CD4-positive, alpha-beta T cell (primary cell): ENCODE measurements at regions of chr16 and their contacts with region 1.

Region 1: DNA sequence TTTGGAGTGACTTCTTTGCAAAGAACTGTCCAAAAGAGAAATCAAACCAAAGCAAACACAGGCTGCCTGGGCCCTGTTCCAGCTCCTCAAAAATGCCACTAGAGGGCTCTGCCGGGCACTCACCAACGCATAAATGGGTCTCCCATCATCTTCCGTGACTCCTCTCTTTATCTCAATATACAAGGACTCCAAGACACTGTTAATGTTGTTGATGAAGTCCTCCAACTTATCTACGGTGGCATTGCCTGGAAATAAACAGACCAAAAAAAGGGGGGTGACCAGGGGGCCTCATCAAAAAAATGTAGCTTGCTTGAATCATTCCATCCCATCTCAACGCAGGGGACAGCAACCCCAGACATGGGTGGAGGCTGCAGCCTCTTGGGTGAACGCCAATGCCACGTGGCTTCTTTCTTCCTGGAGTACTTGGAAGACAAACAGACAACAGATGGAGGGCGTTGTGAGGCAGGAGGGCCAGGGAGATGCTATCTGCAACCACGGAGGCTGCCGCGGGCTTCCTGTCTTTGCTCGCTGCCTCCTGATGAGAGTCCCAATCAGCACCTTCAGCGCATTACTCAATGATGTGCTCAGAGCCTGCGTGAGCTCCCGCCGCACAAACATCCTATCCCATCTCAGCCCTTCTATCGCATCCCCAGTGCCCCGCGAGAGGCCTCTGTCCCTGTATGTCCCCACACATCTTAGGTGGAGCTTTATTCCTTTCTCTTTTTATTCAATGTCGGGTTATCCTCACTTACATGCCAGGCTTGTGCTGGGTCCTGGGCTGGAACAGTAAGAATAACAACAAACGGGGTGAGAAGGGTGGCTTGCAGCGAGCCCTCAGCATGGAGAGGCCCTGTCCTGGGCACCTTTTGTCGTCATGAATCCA is 32.0 kb downstream of the KDM8 start:
- DNase-seq: peak; percentile 81 to 98 (median 94)
- ATAC-seq: peak; percentile 68
- H3K4me3 ChIP-seq: peak overlapping the region; percentile 1
- H3K4me3 Mint-ChIP-seq: peak overlapping the region; percentile 83
- H3K27ac ChIP-seq: peak overlapping the region; percentile 94 to 95
- H3K27ac Mint-ChIP-seq: peak overlapping the region; percentile 95
- H3K4me1 ChIP-seq: peaks cover 94% of the 10 kb centered on the region
- H3K4me1 Mint-ChIP-seq: peaks cover 91% of the 10 kb centered on the region
- H3K27me3 ChIP-seq: no peaks in the 10 kb centered on the region
- H3K27me3 Mint-ChIP-seq: no peaks in the 10 kb centered on the region
- CTCF ChIP-seq: peak; percentile 83

Region 2: DNA sequence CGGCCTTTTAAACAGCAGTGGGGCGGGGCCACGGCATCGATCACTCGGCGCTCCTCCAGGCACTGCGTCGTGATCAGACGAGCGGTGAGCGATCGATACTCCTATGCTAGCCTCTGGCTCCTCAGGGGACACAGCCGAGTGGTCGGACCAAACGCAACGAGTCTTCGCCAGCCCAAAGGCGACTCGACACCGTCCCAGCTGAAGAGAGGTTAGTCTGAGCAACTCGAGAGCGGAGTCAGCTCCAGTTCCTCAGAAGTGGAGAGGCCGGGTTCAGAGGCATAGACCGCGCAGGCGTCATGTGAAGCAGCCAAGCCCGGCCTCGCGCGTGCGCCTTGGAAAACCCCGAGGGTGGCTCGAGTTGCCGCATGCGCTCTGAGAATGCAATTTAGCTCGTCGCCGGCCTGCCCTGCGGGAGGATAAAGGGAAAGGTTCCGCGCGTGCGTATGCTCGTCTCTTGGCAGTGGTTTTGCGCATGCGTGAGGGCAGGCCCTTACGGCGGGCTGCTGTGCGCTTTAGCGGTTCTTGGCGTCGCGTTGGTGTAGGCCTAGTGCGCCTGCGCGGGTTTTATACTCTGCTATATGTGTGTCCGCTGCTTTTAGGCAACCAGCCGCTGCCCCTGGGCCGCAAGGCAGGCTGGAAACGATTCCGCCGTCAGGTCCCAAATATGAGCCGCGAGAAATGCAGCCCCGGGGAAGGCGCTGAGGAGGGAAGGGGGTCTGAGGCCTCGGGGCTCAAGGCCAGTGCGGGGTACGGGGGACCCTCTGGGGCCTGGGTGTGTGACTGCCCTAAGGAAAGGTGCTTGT is 31.7 kb before region 1 on chr16 and contains the start of gene KDM8:
- CTCF ChIA-PET with region 1: interaction called, 22 read pairs
- POLR2A ChIA-PET with region 1: interaction called, 110 read pairs
- intact Hi-C with region 1: loop called (anchors 2 to 5 kb)
- DNase-seq: peak; percentile 98 to 100 (median 100)
- ATAC-seq: peak; percentile 86
- H3K4me3 ChIP-seq: peak within 1 kb of the TSS; percentile 95
- H3K4me3 Mint-ChIP-seq: peak within 1 kb of the TSS; percentile 97
- H3K27ac ChIP-seq: peak within 1 kb of the TSS; percentile 93 to 97
- H3K27ac Mint-ChIP-seq: peak within 1 kb of the TSS; percentile 96
- H3K4me1 ChIP-seq: peaks cover 49% of the 10 kb centered on the region
- H3K4me1 Mint-ChIP-seq: peaks cover 60% of the 10 kb centered on the region
- H3K27me3 ChIP-seq: no peaks in the 10 kb centered on the region
- H3K27me3 Mint-ChIP-seq: no peaks in the 10 kb centered on the region
- CTCF ChIP-seq: no peak
- total RNA-seq, gene KDM8: 15.1 to 17.3 TPM

Region 3: GRCh38 chr16:27273670-27274423 is 38.6 kb after region 1 on chr16:
- CTCF ChIA-PET with region 1: interaction called, 16 read pairs
- POLR2A ChIA-PET with region 1: interaction called, 33 read pairs
- intact Hi-C with region 1: loop called in 1 of 2 experiments (anchors 2 kb)
- DNase-seq: peak in 4 of 14 experiments; percentile 28 to 57 (median 50)
- ATAC-seq: peak; percentile 42
- H3K4me3 ChIP-seq: peak overlapping the region; percentile 9
- H3K4me3 Mint-ChIP-seq: peak overlapping the region; percentile 70
- H3K27ac ChIP-seq: no peak overlapping the region
- H3K27ac Mint-ChIP-seq: peak overlapping the region; percentile 77
- H3K4me1 ChIP-seq: peaks cover 38% of the 10 kb centered on the region
- H3K4me1 Mint-ChIP-seq: peaks cover 53% of the 10 kb centered on the region
- H3K27me3 ChIP-seq: no peaks in the 10 kb centered on the region
- H3K27me3 Mint-ChIP-seq: no peaks in the 10 kb centered on the region
- CTCF ChIP-seq: no peak

Region 4: GRCh38 chr16:27318392-27319226 is 83.3 kb after region 1 on chr16:
- CTCF ChIA-PET with region 1: interaction called, 75 read pairs
- POLR2A ChIA-PET with region 1: interaction called, 68 read pairs
- intact Hi-C with region 1: loop called (anchors 1 to 2 kb)
- DNase-seq: peak; percentile 20 to 75 (median 52)
- ATAC-seq: peak; percentile 70
- H3K4me3 ChIP-seq: peak overlapping the region; percentile 91
- H3K4me3 Mint-ChIP-seq: peak overlapping the region; percentile 86
- H3K27ac ChIP-seq: peak overlapping the region; percentile 70 to 94
- H3K27ac Mint-ChIP-seq: peak overlapping the region; percentile 89
- H3K4me1 ChIP-seq: peaks cover 87% of the 10 kb centered on the region
- H3K4me1 Mint-ChIP-seq: peaks cover 86% of the 10 kb centered on the region
- H3K27me3 ChIP-seq: no peaks in the 10 kb centered on the region
- H3K27me3 Mint-ChIP-seq: no peaks in the 10 kb centered on the region
- CTCF ChIP-seq: no peak

Region 5: DNA sequence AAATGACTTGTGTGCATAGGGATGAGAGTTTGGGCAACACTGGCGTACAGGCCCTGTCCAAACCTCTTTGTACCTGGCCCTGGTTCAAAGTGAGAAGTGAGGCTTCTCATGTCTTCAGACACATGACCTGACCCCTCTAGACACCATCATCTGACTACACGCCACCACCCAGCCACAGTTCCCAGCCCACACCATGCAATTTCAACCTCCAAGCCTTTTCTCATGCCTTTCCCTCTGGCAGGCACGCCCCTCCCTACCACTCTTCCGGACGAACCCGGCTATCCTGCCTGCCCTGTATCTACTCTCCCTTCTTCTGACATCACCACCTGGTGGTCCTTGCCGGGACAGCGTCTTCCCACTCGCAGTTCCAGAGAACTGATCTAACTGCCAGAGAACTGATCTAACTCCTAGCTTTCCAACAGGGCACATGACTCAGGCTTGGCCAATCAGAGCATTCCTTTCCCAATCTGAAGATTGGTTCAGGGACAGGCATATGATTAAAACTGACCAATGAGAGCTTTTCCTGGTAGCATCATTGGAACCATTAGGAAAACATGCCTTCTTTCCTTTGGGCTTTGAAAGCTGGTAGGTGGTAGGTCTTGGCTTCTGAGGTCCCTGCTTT is 139.6 kb after region 1 on chr16:
- CTCF ChIA-PET with region 1: interaction called, 105 read pairs
- POLR2A ChIA-PET with region 1: interaction called, 20 read pairs
- intact Hi-C with region 1: no loop called
- DNase-seq: peak in 9 of 14 experiments; percentile 23 to 71 (median 42)
- ATAC-seq: peak; percentile 52
- H3K4me3 ChIP-seq: no peak overlapping the region
- H3K4me3 Mint-ChIP-seq: no peak overlapping the region
- H3K27ac ChIP-seq: no peak overlapping the region
- H3K27ac Mint-ChIP-seq: no peak overlapping the region
- H3K4me1 ChIP-seq: peaks cover 76% of the 10 kb centered on the region
- H3K4me1 Mint-ChIP-seq: peaks cover 39% of the 10 kb centered on the region
- H3K27me3 ChIP-seq: no peaks in the 10 kb centered on the region
- H3K27me3 Mint-ChIP-seq: no peaks in the 10 kb centered on the region
- CTCF ChIP-seq: peak; percentile 29

Region 6: DNA sequence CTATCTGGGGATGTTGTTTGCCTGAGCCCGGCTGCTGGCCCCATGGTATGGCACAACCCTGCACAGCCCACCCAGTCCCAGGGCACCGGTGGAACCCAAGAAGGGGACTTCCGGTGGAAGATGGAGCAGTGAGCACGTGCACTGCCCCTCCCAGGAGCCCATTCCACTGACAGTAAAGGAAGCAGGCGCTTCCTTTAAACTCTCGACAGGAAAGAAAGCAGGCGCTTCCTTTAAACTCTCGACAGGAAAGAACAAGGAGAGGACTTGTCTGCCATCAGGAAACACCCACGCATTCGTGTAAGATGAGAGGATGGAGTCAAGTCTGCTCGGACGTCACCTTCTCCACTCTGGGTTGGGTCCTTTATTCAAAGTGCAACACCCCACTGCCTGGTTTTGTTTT is 220.4 kb after region 1 on chr16:
- CTCF ChIA-PET with region 1: interaction called, 10 read pairs
- POLR2A ChIA-PET with region 1: interaction called, 4 read pairs
- intact Hi-C with region 1: loop called in 1 of 2 experiments (anchors 2 kb)
- DNase-seq: peak in 3 of 14 experiments; percentile 21 to 38 (median 38)
- ATAC-seq: peak; percentile 43
- H3K4me3 ChIP-seq: no peak overlapping the region
- H3K4me3 Mint-ChIP-seq: peak overlapping the region; percentile 38
- H3K27ac ChIP-seq: no peak overlapping the region
- H3K27ac Mint-ChIP-seq: peak overlapping the region; percentile 50
- H3K4me1 ChIP-seq: peaks cover 52% of the 10 kb centered on the region
- H3K4me1 Mint-ChIP-seq: peaks cover 63% of the 10 kb centered on the region
- H3K27me3 ChIP-seq: no peaks in the 10 kb centered on the region
- H3K27me3 Mint-ChIP-seq: no peaks in the 10 kb centered on the region
- CTCF ChIP-seq: no peak

Region 7: GRCh38 chr16:27495191-27495590 is 259.9 kb after region 1 on chr16:
- CTCF ChIA-PET with region 1: no interaction called
- POLR2A ChIA-PET with region 1: no interaction called
- intact Hi-C with region 1: no loop called
- DNase-seq: no peak
- ATAC-seq: no peak
- H3K4me3 ChIP-seq: no peak overlapping the region
- H3K4me3 Mint-ChIP-seq: no peak overlapping the region
- H3K27ac ChIP-seq: no peak overlapping the region
- H3K27ac Mint-ChIP-seq: no peak overlapping the region
- H3K4me1 ChIP-seq: no peaks in the 10 kb centered on the region
- H3K4me1 Mint-ChIP-seq: no peaks in the 10 kb centered on the region
- H3K27me3 ChIP-seq: no peaks in the 10 kb centered on the region
- H3K27me3 Mint-ChIP-seq: no peaks in the 10 kb centered on the region
- CTCF ChIP-seq: no peak

Region 8: DNA sequence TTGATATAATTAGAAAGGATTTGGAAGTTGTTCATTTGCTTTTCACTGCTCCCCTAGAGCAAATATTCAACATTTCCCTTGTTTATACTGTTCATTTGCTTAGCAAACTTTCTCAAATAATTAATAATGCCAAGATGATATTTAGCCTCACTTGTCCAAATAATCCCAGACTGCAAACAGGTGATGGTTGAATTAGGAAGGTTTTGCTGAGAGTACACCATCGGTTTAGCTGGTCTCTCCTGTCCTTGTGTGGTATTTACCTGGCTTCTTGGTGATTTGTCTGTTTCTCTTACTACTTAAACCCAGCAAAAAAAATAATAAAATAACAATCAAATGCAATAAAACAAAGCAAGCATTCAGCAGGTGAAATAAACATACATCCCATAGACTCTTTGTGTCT is 321.2 kb after region 1 on chr16:
- CTCF ChIA-PET with region 1: no interaction called
- POLR2A ChIA-PET with region 1: no interaction called
- intact Hi-C with region 1: no loop called
- DNase-seq: no peak
- ATAC-seq: no peak
- H3K4me3 ChIP-seq: no peak overlapping the region
- H3K4me3 Mint-ChIP-seq: no peak overlapping the region
- H3K27ac ChIP-seq: no peak overlapping the region
- H3K27ac Mint-ChIP-seq: no peak overlapping the region
- H3K4me1 ChIP-seq: no peaks in the 10 kb centered on the region
- H3K4me1 Mint-ChIP-seq: no peaks in the 10 kb centered on the region
- H3K27me3 ChIP-seq: no peaks in the 10 kb centered on the region
- H3K27me3 Mint-ChIP-seq: no peaks in the 10 kb centered on the region
- CTCF ChIP-seq: no peak